ENCODE measurements at regions of chr6 and their contacts with region 1.

Region 1: GRCh38 chr6:106163446-106163965 is 77.4 kb downstream of the PRDM1 start:
- DNase-seq: peak; percentile 49
- H3K4me3 Mint-ChIP-seq: peak overlapping the region; percentile 69
- H3K27ac Mint-ChIP-seq: peak overlapping the region; percentile 98
- H3K4me1 Mint-ChIP-seq: peaks cover 73% of the 10 kb centered on the region
- H3K27me3 Mint-ChIP-seq: peaks cover 3% of the 10 kb centered on the region

Region 2: DNA sequence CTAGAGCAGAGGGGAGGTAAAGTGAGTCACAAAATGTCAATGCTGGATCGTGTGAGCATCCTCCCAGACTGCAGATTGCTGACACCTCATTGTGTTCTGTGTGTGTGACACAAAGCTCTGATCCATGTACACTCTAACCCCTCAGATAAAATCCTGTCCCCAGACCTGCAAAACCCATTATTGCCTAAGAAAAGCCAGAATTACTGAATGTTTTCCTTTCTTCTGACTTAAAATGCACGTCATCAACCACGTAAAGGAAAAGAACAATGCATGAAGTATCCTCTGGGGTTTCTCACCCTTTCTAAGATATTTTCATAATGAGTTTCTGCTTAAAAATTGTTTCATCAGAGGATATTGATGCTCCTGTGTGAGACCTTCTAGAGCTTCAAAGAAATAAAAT is 542.6 kb before region 1 on chr6:
- intact Hi-C with region 1: loop called (anchors 5 kb)
- DNase-seq: peak; percentile 19
- H3K4me3 Mint-ChIP-seq: peak overlapping the region; percentile 46
- H3K27ac Mint-ChIP-seq: peak overlapping the region; percentile 91
- H3K4me1 Mint-ChIP-seq: peaks cover 46% of the 10 kb centered on the region
- H3K27me3 Mint-ChIP-seq: peaks cover 2% of the 10 kb centered on the region

Region 3: DNA sequence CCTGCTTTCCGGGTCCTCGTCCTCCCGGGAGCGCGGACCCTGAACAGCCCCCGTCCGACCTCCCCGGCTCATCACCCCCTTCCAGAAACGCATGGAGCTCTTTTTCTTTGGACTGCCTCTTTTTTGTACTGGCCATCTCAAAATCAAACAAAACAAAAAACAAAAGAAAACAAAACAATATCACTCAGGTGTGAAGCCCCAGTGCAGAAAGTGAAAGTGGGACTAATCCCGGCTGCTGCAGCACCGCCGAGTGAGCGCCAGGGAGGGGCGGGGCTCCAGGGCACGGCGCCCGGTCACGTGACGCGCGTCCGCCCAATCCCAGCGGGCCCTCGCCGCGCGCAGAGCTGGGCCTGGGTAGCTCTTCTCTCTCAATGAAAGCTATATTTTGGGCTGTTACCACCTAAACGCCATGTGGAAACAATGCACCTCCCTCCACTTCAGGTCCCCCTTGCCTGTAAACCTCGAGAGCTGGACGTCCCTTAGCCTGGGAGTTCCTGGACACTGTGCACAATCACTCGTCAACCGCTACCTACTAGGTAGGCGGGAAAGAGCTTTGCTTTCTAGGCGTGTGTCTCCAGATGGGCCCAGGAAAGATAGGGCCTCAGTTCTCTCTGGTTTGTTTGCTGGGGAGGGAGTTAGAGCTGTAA is 171.1 kb before region 1 on chr6:
- intact Hi-C with region 1: loop called (anchors 1 kb)
- DNase-seq: peak; percentile 91
- H3K4me3 Mint-ChIP-seq: peak overlapping the region; percentile 89
- H3K27ac Mint-ChIP-seq: peak overlapping the region; percentile 96
- H3K4me1 Mint-ChIP-seq: peaks cover 66% of the 10 kb centered on the region
- H3K27me3 Mint-ChIP-seq: peaks cover 24% of the 10 kb centered on the region

Region 4: GRCh38 chr6:106072501-106073090 is 90.9 kb before region 1 on chr6:
- intact Hi-C with region 1: no loop called
- DNase-seq: no peak
- H3K4me3 Mint-ChIP-seq: no peak overlapping the region
- H3K27ac Mint-ChIP-seq: no peak overlapping the region
- H3K4me1 Mint-ChIP-seq: peaks cover 12% of the 10 kb centered on the region
- H3K27me3 Mint-ChIP-seq: peaks cover 28% of the 10 kb centered on the region

Region 5: GRCh38 chr6:106125925-106126435 is 37.5 kb before region 1 on chr6:
- intact Hi-C with region 1: loop called (anchors 1 kb)
- DNase-seq: peak; percentile 34
- H3K4me3 Mint-ChIP-seq: peak overlapping the region; percentile 52
- H3K27ac Mint-ChIP-seq: peak overlapping the region; percentile 83
- H3K4me1 Mint-ChIP-seq: peaks cover 53% of the 10 kb centered on the region
- H3K27me3 Mint-ChIP-seq: peaks cover 5% of the 10 kb centered on the region

Region 6: DNA sequence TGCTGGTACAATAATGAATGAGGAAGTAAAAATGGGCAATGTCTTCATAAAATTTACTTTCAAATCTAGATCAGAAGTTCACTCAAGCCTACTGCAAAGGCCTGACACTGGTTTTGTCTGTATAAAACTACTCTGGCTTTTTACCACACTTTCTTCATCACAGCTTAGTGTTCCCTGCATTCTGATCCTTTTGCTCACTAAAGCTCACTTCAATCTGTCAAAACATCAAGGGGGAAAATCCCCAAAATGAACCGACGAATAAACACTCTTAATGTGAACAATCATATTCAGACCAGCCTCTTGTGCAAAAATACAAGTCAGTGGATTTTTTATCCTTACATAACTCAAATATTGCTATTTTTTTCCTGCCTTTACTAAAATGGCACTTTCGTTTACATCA is 21.1 kb after region 1 on chr6:
- intact Hi-C with region 1: loop called (anchors 1 kb)
- DNase-seq: no peak
- H3K4me3 Mint-ChIP-seq: no peak overlapping the region
- H3K27ac Mint-ChIP-seq: no peak overlapping the region
- H3K4me1 Mint-ChIP-seq: peaks cover 70% of the 10 kb centered on the region
- H3K27me3 Mint-ChIP-seq: no peaks in the 10 kb centered on the region

Region 7: GRCh38 chr6:106519460-106520394 is 356.2 kb after region 1 on chr6:
- intact Hi-C with region 1: loop called (anchors 1 kb)
- DNase-seq: peak; percentile 74
- H3K4me3 Mint-ChIP-seq: peak overlapping the region; percentile 90
- H3K27ac Mint-ChIP-seq: peak overlapping the region; percentile 98
- H3K4me1 Mint-ChIP-seq: peaks cover 79% of the 10 kb centered on the region
- H3K27me3 Mint-ChIP-seq: no peaks in the 10 kb centered on the region